K562 (cell line): ENCODE measurements at regions of chr9 and their contacts with region 1.

Region 1: DNA sequence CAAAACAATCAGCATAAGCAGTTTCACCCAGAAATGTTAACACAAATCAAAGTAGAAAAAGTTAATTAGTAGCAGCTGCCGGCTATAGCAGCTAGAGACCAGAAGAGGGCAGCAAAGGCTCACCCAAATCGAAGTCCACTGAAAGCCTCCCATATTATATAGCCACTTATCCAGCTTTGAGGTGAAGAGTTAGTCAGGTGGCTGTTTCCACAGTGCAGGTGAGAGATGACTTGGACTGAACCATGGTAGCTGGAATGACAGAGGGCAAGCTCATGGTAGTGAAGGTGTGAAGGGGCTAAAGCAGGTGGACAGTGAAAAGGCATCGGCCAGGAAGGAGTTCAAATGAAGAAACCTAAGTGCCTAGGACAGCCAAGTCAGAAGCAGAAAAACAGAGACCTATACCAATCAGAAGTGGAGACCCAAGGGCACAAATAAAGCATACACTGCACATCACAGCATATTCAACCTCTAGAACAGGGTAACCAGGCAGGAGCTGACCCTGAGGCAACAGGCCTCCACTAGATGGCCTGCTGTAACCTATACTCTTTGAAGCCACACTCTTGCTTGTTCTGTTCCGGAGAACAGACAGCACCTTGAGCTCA is 7.2 kb upstream of the RNF38 start:
- DNase-seq: peak; percentile 17 to 60 (median 32)
- ATAC-seq: peak; percentile 89
- H3K4me3 ChIP-seq: no peak overlapping the region
- H3K27ac ChIP-seq: no peak overlapping the region; the same call in 2 of the 3 replicates
- H3K4me1 ChIP-seq: no peaks in the 10 kb centered on the region
- H3K27me3 ChIP-seq: no peaks in the 10 kb centered on the region
- CTCF ChIP-seq: peak; percentile 71 to 87 (median 74)
- EP300 ChIP-seq: no peak
- POLR2A ChIP-seq: no peak
- RAD21 ChIP-seq: peak; percentile 73 to 78

Region 2: DNA sequence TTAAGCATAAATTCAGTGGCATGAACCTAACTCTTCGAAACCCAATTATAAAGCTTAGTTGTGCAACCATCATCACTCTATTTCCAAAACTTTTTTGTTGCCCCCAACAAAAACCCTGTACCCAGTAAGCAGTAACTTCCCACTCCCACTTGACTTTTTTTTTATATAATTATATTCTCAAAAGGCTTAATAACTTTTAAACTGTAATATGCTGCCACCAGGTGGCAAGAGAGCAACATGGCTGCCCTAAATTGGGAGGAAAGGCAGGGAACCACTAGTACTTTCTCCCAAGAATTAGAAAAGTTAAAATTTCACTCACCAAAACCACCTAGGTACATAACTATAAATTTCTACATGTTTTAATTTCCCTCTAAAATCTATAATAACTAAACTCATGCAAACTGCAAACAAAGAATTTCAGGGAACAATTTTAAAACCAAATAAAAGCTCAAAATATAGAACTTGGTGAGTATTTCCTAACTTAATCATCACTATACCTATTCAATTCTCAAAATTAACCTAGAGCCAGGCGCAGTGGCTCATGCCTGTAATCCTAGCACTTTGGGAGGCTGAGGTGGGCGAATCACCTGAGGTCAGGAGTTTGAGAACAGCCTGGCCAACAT is 43.0 kb after region 1 on chr9:
- CTCF ChIA-PET with region 1: interaction called, 29 read pairs
- POLR2A ChIA-PET with region 1: interaction called, 5 read pairs
- in situ Hi-C with region 1: no loop called
- intact Hi-C with region 1: loop called (anchors 1 kb)
- DNase-seq: peak; percentile 19 to 54 (median 30)
- ATAC-seq: peak; percentile 55; the same call in 2 of the 3 replicates
- H3K4me3 ChIP-seq: no peak overlapping the region
- H3K27ac ChIP-seq: no peak overlapping the region
- H3K4me1 ChIP-seq: no peaks in the 10 kb centered on the region; a peak in 2 of 5 replicates
- H3K27me3 ChIP-seq: no peaks in the 10 kb centered on the region
- CTCF ChIP-seq: peak; percentile 52 to 71 (median 53); a peak in 5 of 6 replicates
- EP300 ChIP-seq: no peak
- POLR2A ChIP-seq: no peak
- RAD21 ChIP-seq: peak; percentile 62 to 64

Region 3: DNA sequence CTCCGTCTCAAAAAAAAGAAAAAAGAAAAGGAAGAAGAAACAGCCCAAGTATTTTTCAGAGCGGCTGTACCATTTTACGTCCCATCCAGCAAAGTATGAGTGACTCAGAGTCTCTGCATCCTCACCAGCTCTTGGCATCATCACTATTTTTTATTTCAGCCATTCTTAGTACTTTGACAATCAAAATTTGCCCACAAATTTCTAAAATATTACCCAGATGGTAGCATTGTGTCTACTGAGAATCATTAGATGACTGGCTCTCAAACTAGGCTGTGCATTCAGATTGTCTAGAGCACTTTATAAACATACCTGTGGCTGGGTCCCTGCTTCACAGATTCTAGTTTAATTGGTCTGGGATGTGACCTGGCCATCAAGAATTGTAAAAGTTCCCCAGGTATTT is 143.9 kb after region 1 on chr9:
- CTCF ChIA-PET with region 1: interaction called, 25 read pairs
- POLR2A ChIA-PET with region 1: interaction called, 3 read pairs
- in situ Hi-C with region 1: loop called (anchors 5 kb)
- intact Hi-C with region 1: loop called (anchors 1 kb)
- DNase-seq: no peak
- ATAC-seq: no peak
- H3K4me3 ChIP-seq: no peak overlapping the region
- H3K27ac ChIP-seq: no peak overlapping the region
- H3K4me1 ChIP-seq: no peaks in the 10 kb centered on the region; a peak in 2 of 5 replicates
- H3K27me3 ChIP-seq: no peaks in the 10 kb centered on the region
- CTCF ChIP-seq: no peak
- EP300 ChIP-seq: no peak
- POLR2A ChIP-seq: no peak
- RAD21 ChIP-seq: no peak

Region 4: GRCh38 chr9:36560857-36561221 is 153.6 kb after region 1 on chr9:
- CTCF ChIA-PET with region 1: interaction called, 25 read pairs
- POLR2A ChIA-PET with region 1: interaction called, 4 read pairs
- in situ Hi-C with region 1: no loop called
- intact Hi-C with region 1: loop called (anchors 1 kb)
- DNase-seq: no peak
- ATAC-seq: no peak
- H3K4me3 ChIP-seq: no peak overlapping the region
- H3K27ac ChIP-seq: no peak overlapping the region
- H3K4me1 ChIP-seq: peaks cover 0 to 6% of the 10 kb centered on the region in 2 experiments; a peak in 3 of 5 replicates
- H3K27me3 ChIP-seq: no peaks in the 10 kb centered on the region
- CTCF ChIP-seq: no peak
- EP300 ChIP-seq: no peak
- POLR2A ChIP-seq: no peak
- RAD21 ChIP-seq: no peak

Region 5: GRCh38 chr9:36728651-36729520 is 321.7 kb after region 1 on chr9:
- CTCF ChIA-PET with region 1: interaction called, 11 read pairs
- POLR2A ChIA-PET with region 1: no interaction called
- in situ Hi-C with region 1: loop called (anchors 25 kb)
- intact Hi-C with region 1: loop called (anchors 2 kb)
- DNase-seq: peak; percentile 57 to 72 (median 65)
- ATAC-seq: peak; percentile 91
- H3K4me3 ChIP-seq: no peak overlapping the region
- H3K27ac ChIP-seq: no peak overlapping the region
- H3K4me1 ChIP-seq: no peaks in the 10 kb centered on the region
- H3K27me3 ChIP-seq: peaks cover 3 to 13% of the 10 kb centered on the region in 2 experiments; a peak in 4 of 5 replicates
- CTCF ChIP-seq: peak; percentile 77 to 89 (median 81)
- EP300 ChIP-seq: no peak
- POLR2A ChIP-seq: no peak
- RAD21 ChIP-seq: peak; percentile 74 to 83